Heart left ventricle (tissue), 16 donors: ENCODE measurements at regions of chr2 and their contacts with region 1.

Region 1: DNA sequence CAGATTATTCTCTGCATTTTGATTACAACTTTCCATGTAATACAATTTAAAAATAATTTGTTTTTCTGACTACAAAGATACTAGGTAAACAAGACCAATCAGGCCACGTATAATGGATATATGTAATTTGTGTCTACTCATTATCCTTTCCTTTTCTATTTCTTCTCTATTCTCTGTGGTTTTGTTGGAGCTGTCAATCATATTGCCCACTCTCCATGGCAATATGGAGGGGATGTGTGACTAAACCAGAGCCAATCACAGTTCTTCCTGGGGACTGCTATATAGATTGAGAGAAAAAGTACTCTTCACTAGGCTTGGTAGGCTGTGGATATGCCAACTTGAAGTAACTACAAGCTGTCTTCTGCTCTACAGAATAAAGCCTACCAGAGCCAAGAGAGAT is 144.7 kb downstream of the DNAH7 start:
- DNase-seq: no peak
- ATAC-seq: no peak
- H3K4me3 ChIP-seq: no peak overlapping the region
- H3K27ac ChIP-seq: no peak overlapping the region
- H3K4me1 ChIP-seq: no peaks in the 10 kb centered on the region
- H3K27me3 ChIP-seq: no peaks in the 10 kb centered on the region
- CTCF ChIP-seq: no peak
- POLR2A ChIP-seq: no peak

Region 2: DNA sequence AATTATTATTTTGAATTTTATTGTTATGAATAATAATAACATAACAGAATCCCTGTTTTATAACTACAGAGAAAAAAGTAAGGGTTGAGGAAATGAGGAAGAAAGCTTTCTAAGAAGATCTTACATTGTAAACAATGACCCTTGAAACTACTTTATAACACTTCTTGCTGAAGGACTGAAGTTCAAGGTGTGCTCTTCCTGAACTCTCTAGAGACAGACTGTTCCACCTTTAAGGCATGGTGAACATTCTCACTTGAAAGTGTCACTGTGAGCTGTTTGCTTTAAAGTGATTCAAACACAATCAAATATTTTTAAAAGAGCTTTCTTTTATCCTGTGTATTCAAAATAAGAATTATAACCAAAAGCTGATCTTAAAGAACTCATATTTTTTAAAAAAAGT is 13.3 kb after region 1 on chr2:
- intact Hi-C with region 1: loop called in 1 of 10 experiments (anchors 1 kb)
- DNase-seq: no peak
- ATAC-seq: no peak
- H3K4me3 ChIP-seq: no peak overlapping the region
- H3K27ac ChIP-seq: no peak overlapping the region
- H3K4me1 ChIP-seq: no peaks in the 10 kb centered on the region
- H3K27me3 ChIP-seq: no peaks in the 10 kb centered on the region
- CTCF ChIP-seq: no peak
- POLR2A ChIP-seq: no peak